Dendritic cell treated with granulocyte-macrophage colony-stimulating factor and Interleukin-4, amounts not matched to agents 40 ng/mL and 50 ng/mL, for 4 days (primary cell): ENCODE measurements at regions of chr2 and their contacts with region 1.

Region 1: GRCh38 chr2:30231212-30231995 is at the start of gene LBH:
- H3K4me3 Mint-ChIP-seq: peak within 1 kb of the TSS; percentile 77
- H3K27ac Mint-ChIP-seq: peak within 1 kb of the TSS; percentile 20
- H3K4me1 Mint-ChIP-seq: peaks cover 27% of the 10 kb centered on the region
- H3K27me3 Mint-ChIP-seq: peaks cover 76% of the 10 kb centered on the region

Region 2: DNA sequence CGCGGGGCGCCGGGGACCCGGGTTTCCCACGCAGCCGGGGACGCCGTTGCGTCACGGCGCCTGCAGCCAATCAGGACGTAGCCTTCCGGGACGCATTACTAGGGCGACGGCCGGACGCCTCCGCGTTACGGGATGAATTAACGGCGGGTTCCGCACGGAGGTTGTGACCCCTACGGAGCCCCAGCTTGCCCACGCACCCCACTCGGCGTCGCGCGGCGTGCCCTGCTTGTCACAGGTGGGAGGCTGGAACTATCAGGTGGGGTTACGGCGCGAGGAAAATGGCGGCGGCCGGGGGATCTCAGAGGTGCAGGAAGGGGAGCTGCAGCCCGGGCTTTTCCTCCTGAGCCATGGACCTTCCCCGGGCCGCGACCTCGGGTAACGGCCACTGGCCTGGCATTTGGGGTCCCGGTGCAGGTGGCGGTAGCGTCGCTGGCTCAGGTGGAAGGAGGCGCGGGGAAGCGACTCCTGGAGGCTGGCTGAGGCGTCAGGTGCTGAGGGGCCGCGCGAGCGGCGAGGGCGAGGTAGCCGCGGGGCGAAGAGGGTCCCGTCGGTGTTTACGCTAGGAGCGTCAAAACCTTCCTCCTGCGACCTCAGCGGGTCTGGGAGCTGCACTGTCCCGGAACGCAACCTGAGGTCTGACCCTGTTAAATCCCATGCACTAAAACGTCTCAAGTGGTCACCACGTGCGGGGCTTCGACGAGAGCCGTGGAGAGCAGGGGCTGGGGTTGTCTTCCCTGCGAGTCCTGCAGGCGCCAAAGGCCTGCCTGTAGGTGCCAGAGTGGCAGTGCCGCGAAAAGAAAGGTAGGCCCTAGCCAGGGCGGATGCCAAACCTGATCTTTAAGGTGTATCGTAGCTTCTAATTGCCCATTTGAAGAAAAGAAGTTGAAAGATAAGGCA is 216.0 kb after region 1 on chr2 and contains the start of gene LCLAT1:
- intact Hi-C with region 1: loop called (anchors 10 kb)
- H3K4me3 Mint-ChIP-seq: peak within 1 kb of the TSS; percentile 93
- H3K27ac Mint-ChIP-seq: peak within 1 kb of the TSS; percentile 96
- H3K4me1 Mint-ChIP-seq: peaks cover 16% of the 10 kb centered on the region
- H3K27me3 Mint-ChIP-seq: no peaks in the 10 kb centered on the region